ENCODE measurements at regions of chr21 and their contacts with region 1.

Region 1: DNA sequence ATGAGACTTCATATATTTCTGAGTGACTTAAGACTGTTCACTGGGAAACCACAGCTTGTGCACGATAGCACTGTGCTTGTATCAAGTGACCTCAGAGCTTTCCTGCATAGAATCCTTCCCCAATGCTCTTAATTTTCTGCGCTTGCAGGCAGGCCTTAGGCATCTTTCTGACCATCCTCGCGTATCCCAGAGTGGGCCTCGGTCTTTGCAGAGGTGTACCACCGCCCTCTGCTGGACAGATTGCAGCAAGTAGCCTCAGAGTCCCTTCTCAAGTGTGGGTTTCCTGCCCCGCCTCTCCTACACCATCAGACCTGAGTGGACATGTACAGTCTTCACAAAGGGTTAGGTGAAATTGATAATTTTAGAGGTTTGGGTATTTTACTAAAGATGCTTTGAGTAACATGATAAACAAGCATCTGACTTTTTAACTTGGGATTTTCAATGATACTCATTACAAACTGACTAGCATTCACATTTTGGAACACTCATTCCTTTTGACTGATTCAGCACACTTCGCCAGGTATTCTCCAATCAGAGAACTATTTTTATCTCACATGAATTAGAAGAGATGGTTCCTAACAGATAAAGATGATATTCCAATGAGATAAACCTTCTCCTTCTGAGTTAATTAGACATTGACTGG is 246.5 kb upstream of the USP25 start:
- DNase-seq: peak; percentile 88 to 96
- H3K4me3 ChIP-seq: no peak overlapping the region
- H3K27ac ChIP-seq: no peak overlapping the region
- H3K4me1 ChIP-seq: peaks cover 0 to 5% (median 2%) of the 10 kb centered on the region in 4 donors
- H3K27me3 ChIP-seq: no peaks in the 10 kb centered on the region
- CTCF ChIP-seq: peak in 5 of 7 experiments; percentile 72 to 89 (median 82)
- EP300 ChIP-seq: no peak
- POLR2A ChIP-seq: no peak

Region 2: DNA sequence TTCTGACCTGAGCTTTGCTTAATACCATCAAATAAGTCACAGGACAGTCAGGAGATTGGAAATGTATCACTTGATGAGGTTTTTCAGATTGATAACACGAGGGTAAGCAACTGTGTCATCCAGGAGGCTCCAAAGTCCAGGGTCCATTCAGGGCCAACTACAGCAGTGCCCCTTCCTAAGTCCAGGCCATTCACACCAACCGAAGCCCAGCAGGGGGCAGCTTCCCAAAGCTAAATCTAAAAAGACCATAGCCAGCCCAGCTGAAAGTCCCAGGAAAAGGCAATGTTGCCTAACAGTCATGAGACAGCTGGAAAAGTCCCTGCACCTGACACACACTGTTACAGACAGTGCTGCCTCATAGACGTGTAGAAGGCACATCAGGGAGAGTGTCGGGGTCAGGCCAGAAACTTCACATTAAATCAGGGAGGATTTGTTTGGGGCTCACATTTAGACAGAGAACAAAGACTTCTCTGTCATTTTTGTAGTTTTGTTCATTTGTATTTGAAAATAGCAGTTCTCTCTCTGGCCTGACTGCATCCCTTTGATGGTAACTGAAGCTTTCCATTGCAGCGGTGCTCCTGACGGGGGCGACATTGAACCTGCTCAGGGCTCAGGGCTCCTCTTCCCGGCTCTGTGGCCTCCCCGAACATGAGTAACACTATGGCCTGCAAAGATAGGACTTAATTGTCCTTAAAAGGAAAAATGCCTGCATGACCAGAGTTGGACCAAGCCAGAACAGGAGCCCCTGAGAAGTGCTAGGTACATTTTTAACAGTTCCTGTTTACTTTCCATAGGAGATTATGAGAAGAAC is 618.8 kb before region 1 on chr21:
- intact Hi-C with region 1: loop called (anchors 5 kb)
- DNase-seq: peak; percentile 68 to 86
- H3K4me3 ChIP-seq: no peak overlapping the region
- H3K27ac ChIP-seq: peak overlapping the region in 3 of 5 donors; percentile 3 to 35 (median 24)
- H3K4me1 ChIP-seq: peaks cover 0 to 36% (median 16%) of the 10 kb centered on the region in 4 donors
- H3K27me3 ChIP-seq: no peaks in the 10 kb centered on the region
- CTCF ChIP-seq: peak in 5 of 7 experiments; percentile 35 to 53 (median 44)
- EP300 ChIP-seq: no peak
- POLR2A ChIP-seq: no peak

Region 3: DNA sequence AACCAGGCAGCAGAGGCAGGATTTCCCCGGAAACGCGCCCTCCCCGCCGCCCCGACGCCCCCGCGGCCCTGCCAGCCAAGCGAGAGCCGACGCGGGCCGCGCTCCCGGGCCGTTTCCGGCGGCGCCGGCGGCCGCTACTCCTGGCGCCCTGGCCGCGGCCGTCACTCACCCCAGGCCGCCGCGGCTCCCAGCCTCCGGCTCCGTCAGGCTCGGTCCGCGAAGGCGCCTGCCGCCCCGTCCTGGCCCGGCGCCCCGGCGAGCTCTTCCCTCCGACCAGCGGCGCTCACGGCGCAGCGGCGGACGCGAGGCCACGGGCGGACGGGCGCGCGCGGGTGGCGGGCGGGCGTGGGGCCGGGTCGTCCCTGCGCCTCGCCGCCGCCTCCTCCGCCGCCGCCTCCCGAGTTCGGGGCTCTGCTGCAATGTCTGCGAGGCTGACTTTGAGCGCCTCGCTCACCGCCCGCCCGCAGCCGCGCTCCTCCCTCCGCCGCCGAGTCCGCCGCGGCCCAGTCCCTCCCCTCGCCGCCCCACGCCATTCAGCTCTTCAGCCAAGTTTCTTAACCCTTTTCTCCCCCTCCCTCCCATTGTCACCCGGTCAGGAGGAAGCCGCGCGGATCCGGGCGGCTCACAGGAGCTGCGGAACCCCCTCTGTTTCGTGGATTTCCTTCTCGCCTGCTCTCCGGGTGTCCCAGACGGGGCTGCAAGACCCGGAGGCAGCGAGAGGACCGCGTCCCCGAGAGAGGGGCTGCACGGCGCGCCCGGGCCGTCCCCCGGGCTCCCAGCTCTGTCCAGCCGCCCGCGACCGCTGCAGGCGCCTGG is 418.5 kb before region 1 on chr21 and contains the start of gene NRIP1:
- intact Hi-C with region 1: loop called (anchors 5 kb)
- DNase-seq: peak; percentile 92 to 98
- H3K4me3 ChIP-seq: peak within 1 kb of the TSS; percentile 72 to 92 (median 88)
- H3K27ac ChIP-seq: peak within 1 kb of the TSS; percentile 95 to 100 (median 98)
- H3K4me1 ChIP-seq: peaks cover 13 to 47% (median 31%) of the 10 kb centered on the region in 4 donors
- H3K27me3 ChIP-seq: no peaks in the 10 kb centered on the region
- CTCF ChIP-seq: no peak
- EP300 ChIP-seq: no peak
- POLR2A ChIP-seq: peak in 1 of 4 donors; percentile 26
- total RNA-seq, gene NRIP1: 16.8 to 60.4 (median 22.6) TPM

Measured in stomach (tissue), 19 donors.